Ascending aorta (tissue), 2 donors: ENCODE measurements at regions of chrX and their contacts with region 1.

Region 1: DNA sequence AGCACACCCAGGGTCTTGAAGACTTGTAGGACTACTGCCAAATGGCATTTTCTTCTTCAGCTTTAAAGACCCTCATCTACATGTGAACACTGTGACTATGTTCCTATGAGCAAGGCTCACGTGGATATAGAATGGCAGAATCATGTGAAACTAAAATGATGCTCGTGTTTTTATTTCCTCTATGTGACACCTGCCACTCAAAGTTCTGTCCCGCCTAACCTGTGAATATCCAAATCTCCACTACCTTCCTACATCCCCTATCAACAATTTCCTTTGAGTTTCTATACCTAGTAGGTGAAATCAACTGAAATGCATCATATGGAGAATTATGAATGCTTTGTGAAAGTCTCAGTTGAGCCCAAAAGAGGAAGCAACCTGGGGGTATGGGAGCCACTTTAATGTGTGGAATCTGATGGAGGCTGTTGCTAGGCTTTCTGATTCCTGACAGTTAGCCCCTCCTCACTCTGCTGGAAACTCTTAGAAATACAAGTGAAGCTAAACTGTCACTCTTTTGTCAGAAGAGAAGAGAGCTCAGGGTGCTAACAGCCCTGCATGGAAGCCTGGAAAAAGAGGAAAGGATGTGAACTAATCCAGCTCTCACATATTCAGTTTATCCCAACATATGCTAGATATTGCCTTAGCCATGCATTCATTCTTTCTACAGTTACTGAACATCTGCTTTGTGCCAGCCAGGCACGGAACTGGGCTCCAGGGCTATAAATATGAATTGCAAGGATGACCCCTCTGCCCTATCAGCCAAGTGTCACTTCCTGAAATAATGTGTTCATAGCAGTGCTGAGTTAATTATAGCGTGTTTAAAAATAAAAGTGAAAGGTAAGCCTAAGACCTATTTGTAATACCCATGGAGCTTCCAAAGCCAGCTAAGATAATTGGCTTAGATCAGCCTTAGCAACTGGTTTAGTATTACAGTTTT is 11.0 kb downstream of the LHFPL1 start:
- DNase-seq: no peak
- H3K4me3 ChIP-seq: no peak overlapping the region
- H3K27ac ChIP-seq: no peak overlapping the region
- H3K4me1 ChIP-seq: no peaks in the 10 kb centered on the region
- H3K27me3 ChIP-seq: no peaks in the 10 kb centered on the region
- CTCF ChIP-seq: no peak

Region 2: GRCh38 chrX:111191598-111191997 is 1477.1 kb before region 1 on chrX:
- intact Hi-C with region 1: no loop called
- DNase-seq: no peak
- H3K4me3 ChIP-seq: no peak overlapping the region
- H3K27ac ChIP-seq: no peak overlapping the region
- H3K4me1 ChIP-seq: no peaks in the 10 kb centered on the region
- H3K27me3 ChIP-seq: no peaks in the 10 kb centered on the region
- CTCF ChIP-seq: no peak

Region 3: GRCh38 chrX:112784692-112785091 is 115.9 kb after region 1 on chrX:
- intact Hi-C with region 1: no loop called
- DNase-seq: no peak
- H3K4me3 ChIP-seq: no peak overlapping the region
- H3K27ac ChIP-seq: no peak overlapping the region
- H3K4me1 ChIP-seq: no peaks in the 10 kb centered on the region
- H3K27me3 ChIP-seq: no peaks in the 10 kb centered on the region
- CTCF ChIP-seq: no peak

Region 4: GRCh38 chrX:112839851-112840250 is 171.1 kb after region 1 on chrX:
- intact Hi-C with region 1: loop called (anchors 5 kb)
- DNase-seq: no peak
- H3K4me3 ChIP-seq: peak overlapping the region; percentile 47 to 78
- H3K27ac ChIP-seq: peak overlapping the region in 1 of 2 donors; percentile 76
- H3K4me1 ChIP-seq: no peaks in the 10 kb centered on the region
- H3K27me3 ChIP-seq: no peaks in the 10 kb centered on the region
- CTCF ChIP-seq: no peak